PC-9 (cell line): ENCODE measurements at regions of chr15 and their contacts with region 1.

Region 1: GRCh38 chr15:71800835-71801745 is 9.3 kb upstream of the NR2E3 start:
- DNase-seq: peak; percentile 60 to 65
- H3K4me3 ChIP-seq: no peak overlapping the region
- H3K27ac ChIP-seq: no peak overlapping the region
- H3K4me1 ChIP-seq: peaks cover 13% of the 10 kb centered on the region
- H3K27me3 ChIP-seq: no peaks in the 10 kb centered on the region
- CTCF ChIP-seq: peak; percentile 85

Region 2: GRCh38 chr15:70892002-70892914 is 908.8 kb before region 1 on chr15 and contains the starts of genes LRRC49 and THAP10:
- CTCF ChIA-PET with region 1: no interaction called
- POLR2A ChIA-PET with region 1: no interaction called
- intact Hi-C with region 1: loop called (anchors 10 kb)
- DNase-seq: peak; percentile 87 to 88
- H3K4me3 ChIP-seq: peak within 1 kb of the TSS; percentile 91
- H3K27ac ChIP-seq: peak within 1 kb of the TSS; percentile 54
- H3K4me1 ChIP-seq: peaks cover 22% of the 10 kb centered on the region
- H3K27me3 ChIP-seq: no peaks in the 10 kb centered on the region
- CTCF ChIP-seq: no peak
- total RNA-seq, gene LRRC49: 6.2 and 6.3 TPM in 2 replicates
- total RNA-seq, gene THAP10: 4.2 and 5.5 TPM in 2 replicates

Region 3: GRCh38 chr15:71125831-71126453 is 675.1 kb before region 1 on chr15:
- CTCF ChIA-PET with region 1: no interaction called
- POLR2A ChIA-PET with region 1: interaction called, 12 read pairs
- intact Hi-C with region 1: no loop called
- DNase-seq: no peak
- H3K4me3 ChIP-seq: no peak overlapping the region
- H3K27ac ChIP-seq: no peak overlapping the region
- H3K4me1 ChIP-seq: peaks cover 20% of the 10 kb centered on the region
- H3K27me3 ChIP-seq: no peaks in the 10 kb centered on the region
- CTCF ChIP-seq: peak; percentile 29; the same call in 1 of the 2 replicates

Region 4: DNA sequence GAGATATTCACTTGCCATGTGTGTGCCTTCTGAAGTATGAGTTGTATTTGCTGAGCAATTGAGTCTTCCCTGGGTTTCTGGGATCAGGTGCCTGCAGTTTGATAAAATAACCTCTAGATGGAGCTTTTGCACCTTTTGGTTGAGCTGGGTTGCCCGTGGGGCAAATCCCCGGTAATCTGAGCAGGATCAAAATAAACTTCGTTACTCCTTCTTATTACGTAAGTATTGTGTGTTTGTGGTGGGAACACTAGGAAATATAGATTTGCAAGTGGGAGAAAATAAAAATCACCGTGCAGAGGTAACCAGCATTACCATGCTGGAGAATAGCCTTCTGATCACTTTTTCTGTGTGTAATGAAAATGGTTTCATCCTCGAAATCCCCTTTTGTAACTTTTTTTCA is 268.1 kb before region 1 on chr15:
- CTCF ChIA-PET with region 1: no interaction called
- POLR2A ChIA-PET with region 1: interaction called, 3 read pairs
- intact Hi-C with region 1: loop called (anchors 2 kb)
- DNase-seq: peak; percentile 35 to 37
- H3K4me3 ChIP-seq: no peak overlapping the region
- H3K27ac ChIP-seq: no peak overlapping the region
- H3K4me1 ChIP-seq: 0 out of 2 replicates have a peak, but pooled peaks cover under 1% of the 10 kb centered on the region
- H3K27me3 ChIP-seq: no peaks in the 10 kb centered on the region
- CTCF ChIP-seq: peak; percentile 68

Region 5: GRCh38 chr15:71691458-71692417 is 109.4 kb before region 1 on chr15:
- CTCF ChIA-PET with region 1: no interaction called
- POLR2A ChIA-PET with region 1: no interaction called
- intact Hi-C with region 1: no loop called
- DNase-seq: peak; percentile 51 to 68
- H3K4me3 ChIP-seq: no peak overlapping the region
- H3K27ac ChIP-seq: peak overlapping the region; percentile 34; the same call in 1 of the 2 replicates
- H3K4me1 ChIP-seq: peaks cover 10% of the 10 kb centered on the region
- H3K27me3 ChIP-seq: no peaks in the 10 kb centered on the region
- CTCF ChIP-seq: no peak

Region 6: DNA sequence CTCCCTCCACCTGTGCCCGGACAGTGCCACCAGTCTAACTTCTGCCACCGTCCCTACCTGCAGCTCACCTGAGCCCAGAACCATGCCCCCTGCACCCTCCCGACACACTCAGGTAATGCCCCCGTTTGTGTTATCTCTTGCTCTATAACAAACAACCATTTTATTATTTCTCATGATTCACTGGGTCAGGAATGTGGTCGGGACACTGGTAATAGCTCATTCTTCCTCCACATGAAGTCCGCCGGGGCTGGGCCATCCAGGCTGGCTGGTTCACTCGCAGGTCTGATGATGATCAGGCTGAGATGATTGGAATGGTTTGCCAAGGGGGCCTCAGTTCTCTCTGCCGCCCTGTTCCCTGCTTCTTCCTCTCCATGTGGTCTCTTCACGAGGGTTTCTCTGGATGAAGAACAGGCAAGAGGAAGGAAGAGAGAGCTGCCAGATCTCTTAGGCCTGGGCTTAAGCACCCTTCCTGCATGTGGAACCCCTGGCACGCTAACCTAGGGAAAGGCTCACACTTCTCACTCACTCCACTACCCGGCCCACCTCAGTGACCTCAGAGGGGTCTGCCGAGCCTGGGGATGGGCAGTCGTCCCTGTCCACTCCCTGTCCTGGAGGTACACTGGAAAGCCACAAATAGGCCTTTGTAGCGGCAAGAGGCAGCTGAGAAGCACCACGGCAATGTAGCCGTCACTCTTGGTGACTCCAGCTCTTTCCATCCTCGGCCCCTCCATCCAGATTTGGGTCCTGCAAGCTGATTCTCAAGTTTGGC is 10.8 kb before region 1 on chr15:
- CTCF ChIA-PET with region 1: interaction called, 11 read pairs
- POLR2A ChIA-PET with region 1: interaction called, 3 read pairs
- intact Hi-C with region 1: no loop called
- DNase-seq: peak; percentile 79 to 88
- H3K4me3 ChIP-seq: no peak overlapping the region
- H3K27ac ChIP-seq: peak overlapping the region; percentile 95
- H3K4me1 ChIP-seq: peaks cover 46% of the 10 kb centered on the region
- H3K27me3 ChIP-seq: no peaks in the 10 kb centered on the region
- CTCF ChIP-seq: no peak

Region 7: DNA sequence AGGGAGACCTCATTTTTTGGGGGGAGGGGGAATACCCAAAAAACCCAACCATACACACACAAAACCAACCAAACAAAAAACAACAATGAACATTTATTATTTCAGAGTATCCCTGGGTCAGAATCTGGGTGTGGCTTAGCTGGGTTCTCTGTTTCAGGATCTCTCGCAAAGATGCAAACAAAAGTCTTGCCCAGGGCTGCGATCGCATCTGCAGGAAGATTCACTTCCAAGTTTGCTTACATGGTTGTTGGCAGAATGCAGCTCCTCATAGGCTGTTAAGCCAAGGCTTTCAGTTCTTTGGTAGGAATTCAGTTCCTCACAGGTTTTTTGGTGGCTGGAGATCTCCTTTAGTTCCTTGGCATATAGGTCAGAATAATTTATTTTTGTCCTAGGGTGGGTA is 659.3 kb after region 1 on chr15:
- CTCF ChIA-PET with region 1: no interaction called
- POLR2A ChIA-PET with region 1: interaction called, 20 read pairs
- intact Hi-C with region 1: no loop called
- DNase-seq: no peak
- H3K4me3 ChIP-seq: no peak overlapping the region
- H3K27ac ChIP-seq: no peak overlapping the region
- H3K4me1 ChIP-seq: no peaks in the 10 kb centered on the region
- H3K27me3 ChIP-seq: no peaks in the 10 kb centered on the region
- CTCF ChIP-seq: no peak